Naive thymus-derived CD4-positive, alpha-beta T cell (primary cell): ENCODE measurements at regions of chr3 and their contacts with region 1.

Region 1: GRCh38 chr3:47513125-47513929 is at the start of gene ELP6:
- DNase-seq: peak; percentile 95 to 100 (median 99)
- ATAC-seq: peak; percentile 98
- H3K4me3 ChIP-seq: peak within 1 kb of the TSS; percentile 99
- H3K4me3 Mint-ChIP-seq: peak within 1 kb of the TSS; percentile 92 to 99 (median 97)
- H3K27ac ChIP-seq: peak within 1 kb of the TSS; percentile 95
- H3K27ac Mint-ChIP-seq: peak within 1 kb of the TSS; percentile 96 to 99 (median 98)
- H3K4me1 ChIP-seq: peaks cover 0 to 11% of the 10 kb centered on the region in 2 donors
- H3K4me1 Mint-ChIP-seq: peaks cover 6 to 31% (median 25%) of the 10 kb centered on the region in 7 donors
- H3K27me3 ChIP-seq: no peaks in the 10 kb centered on the region
- H3K27me3 Mint-ChIP-seq: peaks cover 0 to 8% (median 0%) of the 10 kb centered on the region in 5 donors
- total RNA-seq, gene ELP6: 18.8 to 43.1 (median 25.3) TPM

Region 2: GRCh38 chr3:47164007-47164881 is 349.1 kb before region 1 on chr3 and contains the start of gene SETD2:
- CTCF ChIA-PET with region 1: no interaction called
- POLR2A ChIA-PET with region 1: no interaction called
- intact Hi-C with region 1: loop called in 1 of 2 experiments (anchors 1 kb)
- DNase-seq: peak; percentile 67 to 86 (median 82)
- ATAC-seq: peak; percentile 92
- H3K4me3 ChIP-seq: peak within 1 kb of the TSS; percentile 77
- H3K4me3 Mint-ChIP-seq: peak within 1 kb of the TSS; percentile 90 to 99 (median 98)
- H3K27ac ChIP-seq: peak within 1 kb of the TSS; percentile 96
- H3K27ac Mint-ChIP-seq: peak within 1 kb of the TSS; percentile 94 to 99 (median 99)
- H3K4me1 ChIP-seq: peaks cover 30 to 36% of the 10 kb centered on the region in 2 donors
- H3K4me1 Mint-ChIP-seq: peaks cover 34 to 68% (median 56%) of the 10 kb centered on the region in 7 donors
- H3K27me3 ChIP-seq: no peaks in the 10 kb centered on the region
- H3K27me3 Mint-ChIP-seq: no peaks in the 10 kb centered on the region
- total RNA-seq, gene SETD2: 49.2 to 77.3 (median 71.1) TPM

Region 3: DNA sequence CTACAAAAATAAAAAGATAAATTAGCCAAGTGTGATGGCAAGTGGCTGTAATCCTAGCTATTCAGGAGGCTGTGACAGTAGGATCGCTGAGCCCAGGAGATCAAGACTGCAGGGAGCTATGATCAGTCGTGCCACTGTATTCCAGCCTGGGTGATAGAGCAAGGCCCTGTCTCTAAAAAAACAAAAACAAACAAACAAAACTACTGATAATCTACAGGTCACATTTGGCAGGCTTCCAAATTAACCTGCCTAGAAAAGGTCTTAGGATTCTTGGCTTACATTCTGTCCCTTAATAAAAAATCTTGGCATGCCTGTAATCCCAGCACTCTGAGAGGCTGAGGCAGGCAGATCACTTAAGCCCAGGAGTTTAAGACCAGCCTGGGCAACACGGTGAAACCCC is 316.0 kb before region 1 on chr3:
- CTCF ChIA-PET with region 1: no interaction called
- POLR2A ChIA-PET with region 1: no interaction called
- intact Hi-C with region 1: no loop called
- DNase-seq: no peak
- ATAC-seq: no peak
- H3K4me3 ChIP-seq: no peak overlapping the region
- H3K4me3 Mint-ChIP-seq: peak overlapping the region in 1 of 10 donors; percentile 51
- H3K27ac ChIP-seq: no peak overlapping the region
- H3K27ac Mint-ChIP-seq: no peak overlapping the region
- H3K4me1 ChIP-seq: no peaks in the 10 kb centered on the region
- H3K4me1 Mint-ChIP-seq: no peaks in the 10 kb centered on the region
- H3K27me3 ChIP-seq: no peaks in the 10 kb centered on the region
- H3K27me3 Mint-ChIP-seq: no peaks in the 10 kb centered on the region

Region 4: DNA sequence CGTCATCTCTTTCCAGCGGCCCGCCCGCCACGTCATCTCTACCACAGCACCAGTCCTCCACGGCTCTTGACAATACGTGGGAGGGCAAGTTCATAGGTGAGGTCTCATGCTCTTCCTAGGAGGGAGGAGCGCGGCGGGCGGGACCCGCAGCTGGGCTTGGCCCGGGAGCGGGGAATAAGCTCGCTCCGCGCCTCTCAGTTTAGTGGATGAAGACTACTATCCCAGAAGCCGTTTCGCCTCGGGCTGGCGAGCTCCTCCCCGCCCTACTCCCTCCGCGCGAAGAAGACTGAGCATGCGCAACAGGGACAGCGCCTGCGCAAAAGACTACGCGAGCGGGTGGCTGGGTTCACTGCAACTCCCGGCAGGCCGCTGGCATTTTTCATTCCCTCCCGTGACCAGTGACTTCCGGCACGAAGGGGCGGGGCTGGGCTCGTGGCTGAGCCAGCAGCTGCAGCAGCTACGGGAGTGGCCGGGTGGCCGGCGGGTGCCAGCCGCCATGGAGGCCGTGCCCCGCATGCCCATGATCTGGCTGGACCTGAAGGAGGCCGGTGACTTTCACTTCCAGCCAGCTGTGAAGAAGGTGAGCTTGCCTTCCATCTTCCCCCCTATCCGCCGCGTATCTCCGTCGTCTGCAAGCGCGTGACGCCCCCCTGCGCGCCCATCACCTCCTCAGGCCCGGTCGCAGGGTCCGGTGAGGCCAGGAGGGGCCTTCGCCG is 132.6 kb before region 1 on chr3 and contains the start of gene PTPN23:
- CTCF ChIA-PET with region 1: no interaction called
- POLR2A ChIA-PET with region 1: interaction called, 6 read pairs
- intact Hi-C with region 1: loop called (anchors 1 kb)
- DNase-seq: peak; percentile 96 to 99 (median 99)
- ATAC-seq: peak; percentile 82
- H3K4me3 ChIP-seq: peak within 1 kb of the TSS; percentile 86
- H3K4me3 Mint-ChIP-seq: peak within 1 kb of the TSS; percentile 90 to 100 (median 98)
- H3K27ac ChIP-seq: peak within 1 kb of the TSS; percentile 92
- H3K27ac Mint-ChIP-seq: peak within 1 kb of the TSS; percentile 92 to 100 (median 99)
- H3K4me1 ChIP-seq: peaks cover 23 to 26% of the 10 kb centered on the region in 2 donors
- H3K4me1 Mint-ChIP-seq: peaks cover 40 to 56% (median 48%) of the 10 kb centered on the region in 7 donors
- H3K27me3 ChIP-seq: no peaks in the 10 kb centered on the region
- H3K27me3 Mint-ChIP-seq: peaks cover 0 to 2% (median 0%) of the 10 kb centered on the region in 5 donors
- total RNA-seq, gene PTPN23: 35.8 to 51.2 (median 38.5) TPM

Region 5: DNA sequence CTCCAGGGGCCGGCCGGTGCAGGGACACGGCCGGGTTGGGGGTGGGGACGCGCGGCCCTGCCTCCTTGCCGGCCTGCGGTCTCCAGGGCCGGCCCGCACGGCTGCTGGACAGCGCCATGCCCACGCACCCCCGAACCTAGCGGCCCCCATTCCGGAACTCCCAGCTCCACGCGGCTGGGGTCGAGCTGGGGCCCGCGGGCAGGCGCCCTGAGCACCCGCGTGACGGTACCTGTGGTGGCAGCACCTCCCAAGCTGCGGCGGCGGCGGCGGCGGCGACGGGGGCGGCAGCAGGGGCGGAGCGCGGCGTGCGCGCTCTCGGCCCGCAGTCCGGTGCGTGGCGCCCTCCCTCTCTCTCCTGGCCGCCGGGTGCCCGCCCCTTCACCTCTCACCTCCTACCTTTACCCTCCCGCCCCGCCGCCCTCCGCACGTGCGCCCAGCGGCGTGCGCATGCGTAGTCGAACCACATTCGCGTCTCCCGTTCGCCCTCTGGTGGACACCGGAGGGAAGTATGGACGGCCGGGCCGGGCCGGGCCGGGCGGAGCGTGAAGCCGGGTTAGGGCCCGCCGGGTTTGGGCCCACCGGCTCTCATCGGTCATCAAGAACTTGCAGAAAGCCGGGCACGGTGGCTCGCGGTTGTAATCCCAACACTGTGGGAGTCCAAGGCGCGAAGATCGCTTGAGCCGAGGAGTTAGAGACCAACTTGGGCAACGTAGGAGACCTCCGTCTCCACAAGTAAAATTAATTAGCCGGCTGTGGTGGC is 37.6 kb before region 1 on chr3 and contains the start of gene SCAP:
- CTCF ChIA-PET with region 1: interaction called, 3 read pairs
- POLR2A ChIA-PET with region 1: interaction called, 5 read pairs
- intact Hi-C with region 1: loop called (anchors 1 kb)
- DNase-seq: peak; percentile 93 to 99 (median 95)
- ATAC-seq: peak; percentile 97
- H3K4me3 ChIP-seq: peak within 1 kb of the TSS; percentile 69
- H3K4me3 Mint-ChIP-seq: peak within 1 kb of the TSS; percentile 89 to 98 (median 93)
- H3K27ac ChIP-seq: peak within 1 kb of the TSS; percentile 90
- H3K27ac Mint-ChIP-seq: peak within 1 kb of the TSS; percentile 86 to 96 (median 93)
- H3K4me1 ChIP-seq: peaks cover 19 to 20% of the 10 kb centered on the region in 2 donors
- H3K4me1 Mint-ChIP-seq: peaks cover 20 to 54% (median 36%) of the 10 kb centered on the region in 7 donors
- H3K27me3 ChIP-seq: no peaks in the 10 kb centered on the region
- H3K27me3 Mint-ChIP-seq: no peaks in the 10 kb centered on the region
- total RNA-seq, gene SCAP: 80.6 to 95.4 (median 92.9) TPM

Region 6: GRCh38 chr3:47791193-47791855 is 278.0 kb after region 1 on chr3:
- CTCF ChIA-PET with region 1: no interaction called
- POLR2A ChIA-PET with region 1: no interaction called
- intact Hi-C with region 1: loop called in 1 of 2 experiments (anchors 2 kb)
- DNase-seq: no peak
- ATAC-seq: no peak
- H3K4me3 ChIP-seq: no peak overlapping the region
- H3K4me3 Mint-ChIP-seq: no peak overlapping the region
- H3K27ac ChIP-seq: no peak overlapping the region
- H3K27ac Mint-ChIP-seq: peak overlapping the region in 1 of 9 donors; percentile 14
- H3K4me1 ChIP-seq: no peaks in the 10 kb centered on the region
- H3K4me1 Mint-ChIP-seq: peaks cover 0 to 5% (median 3%) of the 10 kb centered on the region in 7 donors
- H3K27me3 ChIP-seq: no peaks in the 10 kb centered on the region
- H3K27me3 Mint-ChIP-seq: no peaks in the 10 kb centered on the region

Region 7: DNA sequence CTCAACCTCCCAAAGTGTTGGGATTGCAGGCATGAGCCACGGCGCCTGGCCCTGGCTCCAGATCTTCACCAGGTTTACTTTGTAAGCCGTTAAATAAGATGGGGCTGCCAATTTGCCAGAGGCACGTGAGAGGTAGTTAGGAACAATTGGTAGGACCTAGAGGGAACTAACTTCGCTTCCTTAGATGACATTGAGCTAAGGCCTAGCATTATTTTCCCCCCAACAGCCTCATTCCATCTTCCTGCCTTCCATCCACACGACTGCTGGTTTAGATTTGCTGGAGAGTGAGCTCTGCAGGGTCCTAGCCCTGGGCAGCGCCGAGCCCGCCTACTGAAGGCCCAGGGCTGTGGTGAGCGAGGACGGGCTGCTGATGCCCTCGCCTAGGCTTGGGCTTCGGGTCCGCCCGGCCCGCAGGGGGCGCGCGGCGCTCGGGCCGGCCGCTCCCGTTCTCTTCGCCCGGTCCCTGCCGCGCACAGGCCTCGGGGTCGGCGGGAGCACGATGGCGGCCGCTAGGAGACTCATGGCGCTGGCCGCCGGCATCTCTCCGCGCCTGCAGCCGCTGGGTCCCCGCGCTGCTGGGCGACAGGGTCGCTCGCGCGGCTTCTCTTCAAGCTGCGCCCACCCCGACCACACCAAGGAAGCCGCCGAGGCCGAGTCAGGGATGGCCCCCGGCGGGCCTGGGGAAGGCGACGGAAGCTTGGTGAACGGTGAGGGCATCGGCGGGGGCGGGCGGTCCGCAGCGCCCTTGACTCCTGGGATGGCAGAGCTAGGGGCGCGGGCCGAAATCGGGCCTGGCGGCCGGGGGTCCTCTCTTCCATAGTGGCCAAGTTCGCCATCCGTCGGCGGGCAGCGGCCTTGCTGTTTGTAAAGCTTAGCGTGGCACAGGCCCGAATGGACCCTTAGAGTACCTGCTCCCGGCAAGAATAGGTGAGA is 311.5 kb after region 1 on chr3:
- CTCF ChIA-PET with region 1: interaction called, 3 read pairs
- POLR2A ChIA-PET with region 1: no interaction called
- intact Hi-C with region 1: loop called in 1 of 2 experiments (anchors 1 kb)
- DNase-seq: peak; percentile 62 to 86 (median 79)
- ATAC-seq: peak; percentile 100
- H3K4me3 ChIP-seq: peak overlapping the region; percentile 79
- H3K4me3 Mint-ChIP-seq: peak overlapping the region; percentile 81 to 94 (median 90)
- H3K27ac ChIP-seq: peak overlapping the region; percentile 88
- H3K27ac Mint-ChIP-seq: peak overlapping the region; percentile 66 to 96 (median 89)
- H3K4me1 ChIP-seq: peaks cover 15% of the 10 kb centered on the region in 2 donors
- H3K4me1 Mint-ChIP-seq: peaks cover 15 to 46% (median 36%) of the 10 kb centered on the region in 7 donors
- H3K27me3 ChIP-seq: no peaks in the 10 kb centered on the region
- H3K27me3 Mint-ChIP-seq: no peaks in the 10 kb centered on the region